Heart right ventricle (tissue), 16 donors: ENCODE measurements at regions of chr2 and their contacts with region 1.

Region 1: GRCh38 chr2:73701968-73702665 is 35.0 kb downstream of the TPRKB start:
- DNase-seq: no peak
- ATAC-seq: no peak
- H3K4me3 ChIP-seq: no peak overlapping the region
- H3K27ac ChIP-seq: peak overlapping the region in 2 of 10 donors; percentile 4 to 71
- H3K4me1 ChIP-seq: peaks cover 0 to 31% (median 5%) of the 10 kb centered on the region in 9 donors
- H3K27me3 ChIP-seq: no peaks in the 10 kb centered on the region
- CTCF ChIP-seq: no peak

Region 2: GRCh38 chr2:73685770-73686438 is 16.2 kb before region 1 on chr2:
- intact Hi-C with region 1: loop called in 1 of 10 experiments (anchors 1 kb)
- DNase-seq: no peak
- ATAC-seq: peak in 6 of 8 donors; percentile 15 to 70 (median 41)
- H3K4me3 ChIP-seq: no peak overlapping the region
- H3K27ac ChIP-seq: no peak overlapping the region
- H3K4me1 ChIP-seq: no peaks in the 10 kb centered on the region
- H3K27me3 ChIP-seq: no peaks in the 10 kb centered on the region
- CTCF ChIP-seq: no peak

Region 3: GRCh38 chr2:73779467-73780236 is 77.5 kb after region 1 on chr2 and contains the start of gene DUSP11:
- intact Hi-C with region 1: loop called in 2 of 10 experiments (anchors 10 kb)
- DNase-seq: peak; percentile 95 to 96
- ATAC-seq: peak; percentile 98 to 100 (median 100)
- H3K4me3 ChIP-seq: peak within 1 kb of the TSS; percentile 56 to 97 (median 83)
- H3K27ac ChIP-seq: peak within 1 kb of the TSS; percentile 68 to 97 (median 92)
- H3K4me1 ChIP-seq: peaks cover 4 to 31% (median 16%) of the 10 kb centered on the region in 9 donors
- H3K27me3 ChIP-seq: no peaks in the 10 kb centered on the region
- CTCF ChIP-seq: peak; percentile 85 to 99 (median 91)
- total RNA-seq, gene DUSP11: 9.2 to 11.6 (median 10.8) TPM

Region 4: DNA sequence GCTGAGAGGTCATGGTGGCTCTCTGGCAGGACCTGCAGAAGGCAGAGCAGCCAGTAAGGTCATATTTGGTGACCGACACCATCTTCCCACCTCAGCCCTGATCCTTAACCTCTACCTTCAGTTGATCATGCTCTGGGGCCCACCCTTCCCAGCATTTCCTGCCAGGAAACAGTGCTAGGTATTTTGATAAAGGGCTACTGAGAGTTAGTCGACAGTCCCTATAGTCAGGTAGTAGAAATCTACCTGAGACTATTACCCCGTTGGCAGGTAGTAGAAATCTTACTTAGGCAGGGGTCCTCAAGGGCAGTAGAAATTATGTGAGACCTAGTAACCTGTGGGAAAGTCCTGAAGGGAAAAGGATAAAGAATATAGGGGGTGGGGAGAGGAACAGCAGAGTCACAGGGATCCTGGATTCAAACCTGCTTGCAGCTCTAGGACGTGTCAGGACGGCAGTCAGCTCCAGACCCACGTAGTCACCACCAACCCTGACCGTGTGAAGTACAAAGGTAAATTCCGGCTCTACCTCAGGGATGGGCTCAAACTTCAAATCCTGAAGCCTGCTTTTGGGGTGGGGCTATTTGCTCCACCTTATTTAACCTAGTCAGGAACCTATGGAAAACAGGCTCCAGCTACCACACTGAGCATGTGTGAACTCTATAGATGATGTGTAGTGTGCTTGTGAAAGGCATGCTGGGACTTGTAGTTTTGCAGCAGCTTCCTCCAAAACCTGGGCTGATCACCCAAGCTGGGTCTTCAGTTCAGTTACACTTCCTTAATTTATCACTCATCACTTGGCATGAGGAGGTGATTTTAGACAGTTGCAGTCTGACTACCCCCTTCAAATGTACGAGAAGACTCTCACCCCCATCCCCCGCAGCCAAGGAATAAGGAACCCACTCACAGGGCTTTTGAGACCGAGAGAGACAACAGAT is 823.9 kb after region 1 on chr2 and contains the start of gene DQX1:
- intact Hi-C with region 1: no loop called
- DNase-seq: no peak
- ATAC-seq: no peak
- H3K4me3 ChIP-seq: no peak within 1 kb of the TSS
- H3K27ac ChIP-seq: no peak within 1 kb of the TSS
- H3K4me1 ChIP-seq: peaks cover 6 to 25% (median 20%) of the 10 kb centered on the region in 9 donors
- H3K27me3 ChIP-seq: peaks cover 0 to 8% (median under 1%) of the 10 kb centered on the region in 7 donors
- CTCF ChIP-seq: no peak
- total RNA-seq, gene DQX1: 0.65 TPM in 1 of 10 donors, not detected in the others